Common myeloid progenitor, CD34-positive (primary cell): ENCODE measurements at regions of chr16 and their contacts with region 1.

Region 1: GRCh38 chr16:57519796-57520360 is 16.5 kb downstream of the CCDC102A start:
- DNase-seq: peak; percentile 72 to 85 (median 83)
- H3K4me3 ChIP-seq: no peak overlapping the region
- H3K27ac ChIP-seq: no peak overlapping the region
- H3K4me1 ChIP-seq: peaks cover 0 to 9% (median 7%) of the 10 kb centered on the region in 4 experiments
- H3K27me3 ChIP-seq: no peaks in the 10 kb centered on the region

Region 2: DNA sequence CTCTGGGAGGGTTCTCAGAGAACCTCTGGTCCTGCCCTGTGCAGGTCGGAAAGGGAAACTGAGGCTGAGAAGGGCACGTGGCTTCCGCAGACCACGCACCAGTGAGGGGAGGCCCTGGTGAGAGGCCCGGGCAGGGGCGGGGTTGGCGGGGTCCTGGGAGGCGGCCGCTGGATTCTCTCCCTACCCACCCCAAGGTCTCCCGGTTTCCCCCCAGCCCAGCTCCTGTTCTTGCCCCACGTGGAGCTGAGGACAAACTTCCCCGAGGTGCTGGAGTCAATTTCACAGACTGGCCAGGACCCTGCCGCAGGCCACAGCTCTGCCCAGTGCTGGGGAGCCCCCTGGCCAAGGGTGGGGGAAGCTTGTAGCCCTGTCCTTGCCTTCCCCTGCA is 103.8 kb before region 1 on chr16:
- CTCF ChIA-PET with region 1: interaction called, 62 read pairs
- POLR2A ChIA-PET with region 1: no interaction called
- DNase-seq: no peak
- H3K4me3 ChIP-seq: peak overlapping the region in 2 of 7 experiments; percentile 60 to 79
- H3K27ac ChIP-seq: no peak overlapping the region
- H3K4me1 ChIP-seq: peaks cover 0 to 25% (median 21%) of the 10 kb centered on the region in 4 experiments
- H3K27me3 ChIP-seq: peaks cover 0 to 1% (median 0%) of the 10 kb centered on the region in 5 experiments

Region 3: GRCh38 chr16:57462209-57462977 is 57.5 kb before region 1 on chr16 and contains the start of gene POLR2C:
- CTCF ChIA-PET with region 1: interaction called, 35 read pairs
- POLR2A ChIA-PET with region 1: interaction called, 6 read pairs
- DNase-seq: peak; percentile 93 to 96 (median 96)
- H3K4me3 ChIP-seq: peak within 1 kb of the TSS; percentile 48 to 94 (median 83)
- H3K27ac ChIP-seq: peak within 1 kb of the TSS; percentile 35 to 81
- H3K4me1 ChIP-seq: peaks cover 3 to 11% (median 10%) of the 10 kb centered on the region in 4 experiments
- H3K27me3 ChIP-seq: no peaks in the 10 kb centered on the region

Region 4: DNA sequence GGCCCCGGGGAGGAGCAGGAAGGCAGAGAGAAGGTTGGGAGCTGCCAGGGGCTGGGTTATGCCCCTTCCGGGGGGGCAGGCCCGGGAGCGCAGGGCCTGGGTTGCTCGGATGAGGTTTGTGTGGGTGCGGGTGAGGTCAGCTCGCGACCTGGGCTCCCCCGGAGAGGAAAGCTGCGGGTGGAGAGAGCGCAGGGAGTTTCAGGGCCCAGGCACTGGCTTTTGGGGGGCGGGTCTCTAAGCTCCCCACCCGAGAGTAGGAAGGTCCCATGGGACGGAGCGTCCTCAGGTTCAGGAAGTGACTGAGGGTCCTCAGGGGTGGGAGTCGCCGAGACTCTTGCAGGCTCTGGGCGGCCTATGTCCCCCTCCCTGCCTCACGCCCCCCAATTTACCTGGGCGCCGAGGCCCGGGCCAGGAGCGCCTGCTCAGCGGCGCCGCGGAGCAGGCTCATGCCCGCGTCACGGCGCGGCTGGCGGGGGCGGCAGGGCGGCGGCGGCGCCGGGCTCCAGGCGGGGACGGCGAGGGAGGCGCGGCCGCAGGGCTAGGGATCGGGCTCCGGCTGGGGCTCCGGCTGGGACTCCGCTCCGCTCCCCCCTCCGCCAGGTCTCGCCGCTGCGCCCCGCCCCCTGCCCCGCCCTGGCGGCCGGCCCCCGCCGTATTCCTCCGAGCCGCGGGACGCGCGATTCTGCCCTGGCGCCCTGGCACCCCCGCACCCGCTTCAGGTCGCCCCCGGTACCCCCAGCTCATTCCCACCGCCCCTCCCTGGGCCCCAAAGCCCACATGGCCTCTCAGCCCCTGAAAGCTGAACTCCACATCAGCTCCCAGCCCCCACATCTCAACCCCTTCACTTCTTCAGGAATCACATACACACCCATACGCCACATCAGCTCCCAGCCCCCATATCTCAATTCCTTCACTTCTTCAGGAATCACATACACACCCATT is 33.7 kb before region 1 on chr16 and contains the start of gene DOK4:
- CTCF ChIA-PET with region 1: interaction called, 134 read pairs
- POLR2A ChIA-PET with region 1: interaction called, 3 read pairs
- DNase-seq: peak; percentile 38 to 79 (median 73)
- H3K4me3 ChIP-seq: peak within 1 kb of the TSS; percentile 62 to 88 (median 78)
- H3K27ac ChIP-seq: no peak within 1 kb of the TSS
- H3K4me1 ChIP-seq: peaks cover 0 to 20% (median 15%) of the 10 kb centered on the region in 4 experiments
- H3K27me3 ChIP-seq: no peaks in the 10 kb centered on the region